Naive thymus-derived CD4-positive, alpha-beta T cell (primary cell): ENCODE measurements at regions of chr2 and their contacts with region 1.

Region 1: DNA sequence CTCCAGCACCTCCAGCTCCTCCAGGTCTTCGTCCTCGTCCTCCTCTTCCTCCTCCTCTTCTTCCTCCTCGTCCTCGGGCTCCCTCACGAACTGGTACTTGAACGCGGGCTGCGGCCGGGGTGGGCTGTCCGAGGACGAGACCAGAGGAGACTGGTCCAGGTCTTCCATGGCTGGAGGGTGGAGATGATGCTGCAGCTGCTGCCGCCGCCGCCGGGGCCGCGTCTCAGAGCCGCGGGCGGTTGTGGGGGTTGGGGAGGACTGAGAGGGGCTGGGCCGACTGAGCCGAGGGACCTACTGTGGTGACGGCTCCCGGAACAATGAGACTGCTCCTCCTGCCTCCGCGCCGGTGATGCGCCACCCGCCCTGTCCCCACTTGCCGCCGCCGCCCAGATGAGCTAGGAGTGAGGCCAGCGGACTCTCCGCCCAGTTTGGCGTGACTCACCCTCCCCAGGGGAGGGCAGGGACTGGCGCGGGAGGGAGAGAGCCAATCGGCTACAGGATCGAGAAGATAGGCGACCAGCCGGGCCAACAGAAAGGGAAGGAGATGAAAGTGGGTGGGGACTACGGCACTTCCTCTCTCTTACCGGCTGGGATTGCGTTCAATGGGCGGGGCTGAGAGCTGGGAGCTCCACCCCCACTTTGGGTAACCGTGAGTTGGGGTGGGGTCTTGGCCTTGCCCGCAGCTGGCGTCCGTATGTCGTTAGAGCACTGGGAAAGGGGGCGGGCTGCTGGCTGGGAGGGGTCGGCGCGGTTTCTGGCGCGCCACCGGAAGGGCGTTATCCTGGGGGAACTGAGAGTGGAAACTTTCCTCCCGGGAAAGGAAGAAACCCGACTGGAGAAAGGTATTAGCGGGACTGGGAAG is at the start of gene RTN4:
- DNase-seq: peak; percentile 89 to 99 (median 97)
- ATAC-seq: peak; percentile 94
- H3K4me3 ChIP-seq: peak within 1 kb of the TSS; percentile 93
- H3K4me3 Mint-ChIP-seq: peak within 1 kb of the TSS; percentile 97 to 100 (median 100)
- H3K27ac ChIP-seq: peak within 1 kb of the TSS; percentile 81
- H3K27ac Mint-ChIP-seq: peak within 1 kb of the TSS; percentile 97 to 100 (median 100)
- H3K4me1 ChIP-seq: peaks cover 31 to 38% of the 10 kb centered on the region in 2 donors
- H3K4me1 Mint-ChIP-seq: peaks cover 40 to 82% (median 68%) of the 10 kb centered on the region in 7 donors
- H3K27me3 ChIP-seq: no peaks in the 10 kb centered on the region
- H3K27me3 Mint-ChIP-seq: no peaks in the 10 kb centered on the region
- total RNA-seq, gene RTN4: 59.6 to 100 (median 65.1) TPM

Region 2: GRCh38 chr2:53767405-53768241 is 1282.7 kb before region 1 on chr2 and contains the start of gene CHAC2:
- CTCF ChIA-PET with region 1: no interaction called
- POLR2A ChIA-PET with region 1: no interaction called
- intact Hi-C with region 1: loop called in 1 of 2 experiments (anchors 5 kb)
- DNase-seq: peak; percentile 74 to 86 (median 84)
- ATAC-seq: peak; percentile 93
- H3K4me3 ChIP-seq: peak within 1 kb of the TSS; percentile 80
- H3K4me3 Mint-ChIP-seq: peak within 1 kb of the TSS; percentile 88 to 98 (median 92)
- H3K27ac ChIP-seq: peak within 1 kb of the TSS; percentile 86
- H3K27ac Mint-ChIP-seq: peak within 1 kb of the TSS; percentile 60 to 99 (median 90)
- H3K4me1 ChIP-seq: peaks cover 0 to 8% of the 10 kb centered on the region in 2 donors
- H3K4me1 Mint-ChIP-seq: peaks cover 7 to 41% (median 33%) of the 10 kb centered on the region in 7 donors
- H3K27me3 ChIP-seq: no peaks in the 10 kb centered on the region
- H3K27me3 Mint-ChIP-seq: no peaks in the 10 kb centered on the region
- total RNA-seq, gene CHAC2: 0.29 to 12.1 (median 1.2) TPM

Region 3: GRCh38 chr2:54570925-54571694 is 479.3 kb before region 1 on chr2:
- CTCF ChIA-PET with region 1: no interaction called
- POLR2A ChIA-PET with region 1: no interaction called
- intact Hi-C with region 1: loop called in 1 of 2 experiments (anchors 1 kb)
- DNase-seq: peak in 8 of 9 donors; percentile 61 to 84 (median 68)
- ATAC-seq: peak; percentile 24
- H3K4me3 ChIP-seq: peak overlapping the region; percentile 58
- H3K4me3 Mint-ChIP-seq: peak overlapping the region; percentile 72 to 94 (median 88)
- H3K27ac ChIP-seq: peak overlapping the region; percentile 95
- H3K27ac Mint-ChIP-seq: peak overlapping the region; percentile 90 to 99 (median 97)
- H3K4me1 ChIP-seq: peaks cover 76 to 91% of the 10 kb centered on the region in 2 donors
- H3K4me1 Mint-ChIP-seq: peaks cover 68 to 100% (median 93%) of the 10 kb centered on the region in 7 donors
- H3K27me3 ChIP-seq: no peaks in the 10 kb centered on the region
- H3K27me3 Mint-ChIP-seq: no peaks in the 10 kb centered on the region

Region 4: DNA sequence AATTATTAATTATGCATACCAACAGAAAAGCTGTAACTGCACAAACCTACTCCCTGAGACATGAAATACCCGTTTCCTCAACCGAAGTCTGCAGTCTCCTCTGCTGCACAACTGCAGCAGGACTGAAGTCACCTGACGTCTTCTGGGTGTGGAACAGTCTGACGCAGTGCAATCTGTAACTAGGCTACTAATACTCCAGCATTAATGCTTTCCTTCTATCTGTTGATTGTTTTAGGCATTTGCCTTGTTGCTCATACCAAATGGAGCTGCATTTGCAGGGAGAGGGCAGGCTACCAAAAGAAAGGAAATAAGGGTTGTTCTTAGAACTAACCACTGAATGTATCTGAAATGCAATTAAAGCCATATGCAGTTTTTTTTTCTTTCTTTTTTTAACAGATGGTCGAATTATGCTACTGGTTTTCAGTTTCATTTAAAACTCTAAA is 40.2 kb before region 1 on chr2:
- CTCF ChIA-PET with region 1: interaction called, 4 read pairs
- POLR2A ChIA-PET with region 1: interaction called, 6 read pairs
- intact Hi-C with region 1: loop called (anchors 1 to 2 kb)
- DNase-seq: peak; percentile 15 to 71 (median 60)
- ATAC-seq: peak; percentile 94
- H3K4me3 ChIP-seq: peak overlapping the region; percentile 58
- H3K4me3 Mint-ChIP-seq: peak overlapping the region; percentile 88 to 97 (median 92)
- H3K27ac ChIP-seq: peak overlapping the region; percentile 68
- H3K27ac Mint-ChIP-seq: peak overlapping the region; percentile 82 to 96 (median 90)
- H3K4me1 ChIP-seq: peaks cover 27 to 29% of the 10 kb centered on the region in 2 donors
- H3K4me1 Mint-ChIP-seq: peaks cover 44 to 91% (median 79%) of the 10 kb centered on the region in 7 donors
- H3K27me3 ChIP-seq: no peaks in the 10 kb centered on the region
- H3K27me3 Mint-ChIP-seq: no peaks in the 10 kb centered on the region

Region 5: GRCh38 chr2:55099878-55100820 is 49.8 kb after region 1 on chr2:
- CTCF ChIA-PET with region 1: no interaction called
- POLR2A ChIA-PET with region 1: no interaction called
- intact Hi-C with region 1: loop called in 1 of 2 experiments (anchors 5 kb)
- DNase-seq: no peak
- ATAC-seq: peak; percentile 42
- H3K4me3 ChIP-seq: no peak overlapping the region
- H3K4me3 Mint-ChIP-seq: peak overlapping the region in 1 of 10 donors; percentile 5
- H3K27ac ChIP-seq: no peak overlapping the region
- H3K27ac Mint-ChIP-seq: no peak overlapping the region
- H3K4me1 ChIP-seq: no peaks in the 10 kb centered on the region
- H3K4me1 Mint-ChIP-seq: peaks cover 0 to 7% (median 4%) of the 10 kb centered on the region in 7 donors
- H3K27me3 ChIP-seq: no peaks in the 10 kb centered on the region
- H3K27me3 Mint-ChIP-seq: no peaks in the 10 kb centered on the region

Region 6: DNA sequence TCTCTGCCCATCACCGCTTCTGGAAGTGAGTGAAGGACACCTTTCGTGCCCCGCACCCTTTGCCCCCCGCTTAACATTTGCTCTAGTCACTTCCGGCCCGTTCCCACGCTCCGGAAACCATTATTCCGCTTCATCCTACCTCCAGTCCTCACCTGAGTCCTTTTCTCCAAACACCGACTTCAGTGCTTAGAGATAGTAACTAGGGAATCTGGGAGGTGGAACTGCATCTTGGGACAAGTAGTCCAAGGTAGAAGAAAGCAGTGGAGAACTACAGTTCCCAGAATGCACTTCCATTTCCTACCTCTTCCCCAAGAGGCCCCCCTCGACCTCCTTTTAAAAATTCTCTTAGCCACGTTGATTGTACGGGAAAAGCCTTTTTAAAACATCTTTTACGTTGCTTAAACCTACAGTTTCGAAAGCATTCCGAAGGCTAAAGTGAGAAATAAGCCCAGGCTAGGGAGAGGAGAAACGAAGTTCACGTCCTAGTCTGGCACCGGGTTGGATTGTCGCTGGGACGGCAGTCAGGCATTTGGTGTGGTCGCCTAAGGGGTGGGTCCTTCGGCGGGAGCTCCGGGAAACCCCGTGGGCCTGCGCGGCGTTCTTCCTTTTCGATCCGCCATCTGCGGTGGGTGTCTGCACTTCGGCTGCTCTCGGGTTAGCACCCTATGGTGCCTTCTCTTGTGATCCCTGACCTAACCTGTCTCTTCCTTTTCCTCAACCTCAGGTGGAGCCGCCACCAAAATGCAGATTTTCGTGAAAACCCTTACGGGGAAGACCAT is 181.9 kb after region 1 on chr2 and contains the starts of genes CLHC1 and RPS27A:
- CTCF ChIA-PET with region 1: no interaction called
- POLR2A ChIA-PET with region 1: interaction called, 9 read pairs
- intact Hi-C with region 1: loop called (anchors 1 kb)
- DNase-seq: peak; percentile 90 to 97 (median 93)
- ATAC-seq: peak; percentile 95
- H3K4me3 ChIP-seq: peak within 1 kb of the TSS; percentile 75
- H3K4me3 Mint-ChIP-seq: peak within 1 kb of the TSS; percentile 96 to 100 (median 100)
- H3K27ac ChIP-seq: peak within 1 kb of the TSS; percentile 99
- H3K27ac Mint-ChIP-seq: peak within 1 kb of the TSS; percentile 96 to 99 (median 99)
- H3K4me1 ChIP-seq: peaks cover 26 to 30% of the 10 kb centered on the region in 2 donors
- H3K4me1 Mint-ChIP-seq: peaks cover 41 to 84% (median 63%) of the 10 kb centered on the region in 7 donors
- H3K27me3 ChIP-seq: no peaks in the 10 kb centered on the region
- H3K27me3 Mint-ChIP-seq: no peaks in the 10 kb centered on the region
- total RNA-seq, gene CLHC1: 5.3 to 19.5 (median 15.1) TPM
- total RNA-seq, gene RPS27A: 948 to 2,409 (median 2,155) TPM

Region 7: DNA sequence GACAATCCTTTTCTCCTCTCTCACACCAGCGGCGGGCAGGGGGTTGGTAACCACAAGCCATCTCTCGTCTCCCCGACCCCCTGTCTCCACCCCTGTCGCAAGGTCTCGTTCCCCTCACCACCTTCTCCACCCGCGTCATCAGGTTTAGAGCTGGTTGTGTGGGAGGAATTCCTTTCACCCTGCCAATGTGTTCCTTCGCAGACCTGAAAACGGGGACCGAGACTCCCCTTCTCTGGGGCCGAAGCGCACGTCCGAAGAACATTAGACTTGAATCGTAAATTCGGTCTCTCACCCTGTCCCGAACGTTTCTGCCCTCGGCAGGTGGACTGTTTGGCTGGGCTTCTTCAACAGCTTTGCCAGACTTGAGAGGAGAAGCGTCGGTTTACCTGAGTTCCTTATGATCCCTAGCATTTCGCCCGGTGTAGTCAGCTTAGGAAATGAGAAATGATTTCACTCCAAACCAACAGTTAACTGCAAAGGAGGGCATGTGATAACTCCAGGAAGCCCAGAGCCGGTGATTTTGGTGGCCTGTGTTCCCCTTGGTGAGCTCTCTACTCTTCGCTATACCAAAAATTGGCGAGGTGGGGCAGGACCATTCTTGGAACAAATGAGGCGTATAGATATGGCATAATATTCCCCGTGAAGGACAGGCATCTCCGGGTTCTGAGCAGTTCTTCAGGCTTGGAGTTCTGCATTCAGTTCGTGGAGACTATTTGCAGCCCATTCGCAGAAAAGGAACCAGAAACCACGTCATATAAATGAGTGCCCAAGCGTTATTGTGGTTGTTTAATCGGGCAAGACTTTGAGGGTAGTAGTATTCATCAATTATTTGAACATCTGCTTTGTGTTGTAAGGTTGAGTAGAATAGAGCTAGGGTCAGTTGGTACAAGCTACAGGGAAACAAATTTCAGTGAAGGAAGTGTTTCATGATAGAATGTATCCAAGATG is 469.8 kb after region 1 on chr2:
- CTCF ChIA-PET with region 1: no interaction called
- POLR2A ChIA-PET with region 1: interaction called, 9 read pairs
- intact Hi-C with region 1: loop called (anchors 1 kb)
- DNase-seq: peak in 4 of 9 donors; percentile 23 to 58 (median 26)
- ATAC-seq: peak; percentile 31
- H3K4me3 ChIP-seq: peak overlapping the region; percentile 80
- H3K4me3 Mint-ChIP-seq: peak overlapping the region; percentile 89 to 99 (median 98)
- H3K27ac ChIP-seq: peak overlapping the region; percentile 90
- H3K27ac Mint-ChIP-seq: peak overlapping the region; percentile 96 to 100 (median 100)
- H3K4me1 ChIP-seq: peaks cover 0 to 5% of the 10 kb centered on the region in 2 donors
- H3K4me1 Mint-ChIP-seq: peaks cover 5 to 28% (median 16%) of the 10 kb centered on the region in 7 donors
- H3K27me3 ChIP-seq: no peaks in the 10 kb centered on the region
- H3K27me3 Mint-ChIP-seq: no peaks in the 10 kb centered on the region

Region 8: DNA sequence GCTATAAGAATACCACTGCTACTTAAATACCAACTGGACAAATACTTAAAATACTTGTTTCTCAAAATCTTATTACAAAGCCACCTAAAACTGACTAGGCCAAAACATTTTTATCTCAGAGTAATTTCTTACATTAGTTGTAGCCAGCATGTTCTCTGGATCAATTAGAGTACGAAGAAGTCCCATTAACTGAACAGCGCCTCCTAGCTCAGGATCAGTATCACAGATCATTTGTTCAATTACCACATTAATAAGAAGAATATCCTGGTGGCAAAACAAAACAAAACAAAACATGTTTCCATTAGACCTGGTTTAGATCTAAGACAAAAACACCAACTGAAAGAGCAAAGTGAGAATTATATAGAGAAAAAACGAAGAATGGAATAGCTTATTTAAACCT is 531.1 kb after region 1 on chr2:
- CTCF ChIA-PET with region 1: no interaction called
- POLR2A ChIA-PET with region 1: no interaction called
- intact Hi-C with region 1: no loop called
- DNase-seq: peak in 1 of 9 donors; percentile 10
- ATAC-seq: no peak
- H3K4me3 ChIP-seq: no peak overlapping the region
- H3K4me3 Mint-ChIP-seq: peak overlapping the region in 1 of 10 donors; percentile 23
- H3K27ac ChIP-seq: no peak overlapping the region
- H3K27ac Mint-ChIP-seq: peak overlapping the region in 8 of 9 donors; percentile 24 to 83 (median 64)
- H3K4me1 ChIP-seq: peaks cover 0 to 5% of the 10 kb centered on the region in 2 donors
- H3K4me1 Mint-ChIP-seq: peaks cover 2 to 41% (median 23%) of the 10 kb centered on the region in 7 donors
- H3K27me3 ChIP-seq: no peaks in the 10 kb centered on the region
- H3K27me3 Mint-ChIP-seq: no peaks in the 10 kb centered on the region

Region 9: GRCh38 chr2:55761024-55761423 is 710.7 kb after region 1 on chr2:
- CTCF ChIA-PET with region 1: no interaction called
- POLR2A ChIA-PET with region 1: no interaction called
- intact Hi-C with region 1: no loop called
- DNase-seq: no peak
- ATAC-seq: no peak
- H3K4me3 ChIP-seq: no peak overlapping the region
- H3K4me3 Mint-ChIP-seq: no peak overlapping the region
- H3K27ac ChIP-seq: no peak overlapping the region
- H3K27ac Mint-ChIP-seq: no peak overlapping the region
- H3K4me1 ChIP-seq: no peaks in the 10 kb centered on the region
- H3K4me1 Mint-ChIP-seq: no peaks in the 10 kb centered on the region
- H3K27me3 ChIP-seq: no peaks in the 10 kb centered on the region
- H3K27me3 Mint-ChIP-seq: peaks cover 5 to 40% (median 32%) of the 10 kb centered on the region in 5 donors